ENCODE measurements at regions of chr18 and their contacts with region 1.

Region 1: GRCh38 chr18:27652480-27653121 is 467.5 kb upstream of the CHST9 start:
- DNase-seq: peak in 1 of 2 donors; percentile 10
- ATAC-seq: peak; percentile 79 to 98 (median 91)
- H3K4me3 ChIP-seq: no peak overlapping the region
- H3K27ac ChIP-seq: peak overlapping the region in 1 of 10 donors; percentile 7
- H3K4me1 ChIP-seq: peaks cover 0 to 6% (median 0%) of the 10 kb centered on the region in 9 donors
- H3K27me3 ChIP-seq: no peaks in the 10 kb centered on the region
- CTCF ChIP-seq: no peak

Region 2: DNA sequence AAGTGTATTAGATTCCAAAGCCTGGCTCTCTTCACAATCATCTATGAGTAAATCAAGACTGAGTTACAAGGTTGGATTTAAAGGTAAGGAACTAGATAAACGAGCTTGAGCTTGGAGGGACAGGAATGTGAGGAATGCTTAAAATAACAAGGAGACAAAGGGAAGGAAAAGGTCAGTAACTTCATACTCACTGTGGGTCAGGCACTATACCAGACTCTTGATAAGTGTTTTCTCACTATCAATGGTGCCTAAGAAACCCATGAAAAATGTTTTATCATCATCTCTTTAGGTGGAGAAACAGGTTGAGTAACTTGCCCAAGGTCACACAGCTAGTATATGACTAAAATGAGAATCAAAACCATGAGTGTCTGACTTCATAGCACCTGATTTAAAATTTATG is 312.2 kb after region 1 on chr18:
- intact Hi-C with region 1: no loop called
- DNase-seq: no peak
- ATAC-seq: no peak
- H3K4me3 ChIP-seq: no peak overlapping the region
- H3K27ac ChIP-seq: no peak overlapping the region
- H3K4me1 ChIP-seq: peaks cover 0 to 37% (median 0%) of the 10 kb centered on the region in 9 donors
- H3K27me3 ChIP-seq: no peaks in the 10 kb centered on the region
- CTCF ChIP-seq: no peak

Region 3: DNA sequence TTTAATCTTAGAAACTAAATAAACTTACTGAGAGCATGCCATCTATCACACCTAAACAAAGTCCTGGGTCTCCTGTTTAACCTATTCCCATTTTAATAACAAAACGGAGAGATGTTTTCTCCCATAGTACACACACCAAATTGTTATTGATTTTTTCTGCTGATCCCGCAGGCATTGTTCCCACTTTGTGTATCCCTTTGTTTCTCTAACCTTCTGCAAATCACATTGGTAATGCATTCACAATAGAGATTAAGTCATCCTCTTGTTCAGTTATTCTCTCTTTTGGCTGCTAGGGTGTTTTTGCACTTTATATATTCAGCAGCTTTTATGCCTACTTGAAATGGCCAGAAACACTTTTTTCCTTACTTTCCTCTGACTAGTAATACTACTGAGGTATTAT is 1596.2 kb after region 1 on chr18:
- intact Hi-C with region 1: loop called in 1 of 10 experiments (anchors 5 kb)
- DNase-seq: no peak
- ATAC-seq: no peak
- H3K4me3 ChIP-seq: no peak overlapping the region
- H3K27ac ChIP-seq: no peak overlapping the region
- H3K4me1 ChIP-seq: no peaks in the 10 kb centered on the region
- H3K27me3 ChIP-seq: no peaks in the 10 kb centered on the region
- CTCF ChIP-seq: no peak